PC-9 (cell line): ENCODE measurements at regions of chr5 and their contacts with region 1.

Region 1: DNA sequence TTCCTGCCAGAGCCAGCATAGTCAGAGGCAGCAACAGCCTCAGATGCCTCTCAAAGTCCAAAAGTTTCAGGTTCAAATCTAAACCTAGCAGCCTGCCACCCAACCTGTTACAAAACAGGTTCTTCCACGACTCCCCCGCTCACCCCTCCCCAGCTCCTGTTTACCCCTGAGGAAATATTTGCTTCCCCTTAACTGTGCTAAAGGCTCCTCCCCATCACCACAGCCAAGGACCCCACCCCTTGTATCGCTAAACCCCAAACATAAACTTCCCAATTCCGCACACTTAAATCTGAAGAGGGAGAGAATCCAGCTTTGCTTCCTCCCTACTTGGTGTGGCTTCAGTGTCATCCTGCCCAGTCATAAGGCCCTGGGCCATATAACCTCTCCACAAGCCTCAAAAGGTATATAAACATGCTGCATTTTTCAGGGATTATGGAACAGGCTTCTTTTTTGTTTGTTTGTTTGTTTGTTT is 15.5 kb upstream of the VDAC1 start:
- DNase-seq: peak; percentile 75 to 96
- H3K4me3 ChIP-seq: peak overlapping the region; percentile 32; the same call in 1 of the 2 replicates
- H3K27ac ChIP-seq: peak overlapping the region; percentile 92
- H3K4me1 ChIP-seq: peaks cover 74% of the 10 kb centered on the region
- H3K27me3 ChIP-seq: no peaks in the 10 kb centered on the region
- CTCF ChIP-seq: no peak

Region 2: DNA sequence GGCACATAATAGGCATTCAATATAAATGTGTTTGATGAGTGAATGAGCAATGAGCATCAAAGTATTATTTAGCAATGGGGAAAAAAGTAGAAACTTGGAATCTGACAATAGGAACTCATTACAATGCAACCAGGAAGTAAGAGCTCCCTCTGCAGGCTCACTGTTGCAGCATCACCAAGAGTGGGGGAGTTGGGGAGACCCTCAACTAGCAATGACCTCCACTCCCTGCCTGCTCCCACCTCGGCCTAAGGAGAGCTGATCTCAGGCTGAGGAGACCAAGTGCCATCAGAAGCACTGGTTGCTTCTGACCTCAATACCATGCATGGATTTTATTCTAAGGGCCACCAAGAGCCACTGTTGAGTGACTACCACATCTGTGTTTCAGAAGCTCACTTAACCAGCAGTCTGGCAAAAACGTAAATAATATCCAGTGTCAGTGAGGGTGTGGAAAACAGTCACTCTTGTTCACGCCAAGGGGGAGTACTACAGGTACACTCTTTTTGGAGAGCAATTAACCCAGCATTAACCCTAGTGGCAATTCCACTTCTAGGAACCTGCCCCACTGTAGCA is 23.5 kb before region 1 on chr5:
- CTCF ChIA-PET with region 1: interaction called, 6 read pairs
- POLR2A ChIA-PET with region 1: interaction called, 10 read pairs
- intact Hi-C with region 1: no loop called
- DNase-seq: no peak
- H3K4me3 ChIP-seq: no peak overlapping the region
- H3K27ac ChIP-seq: no peak overlapping the region
- H3K4me1 ChIP-seq: peaks cover 79% of the 10 kb centered on the region
- H3K27me3 ChIP-seq: no peaks in the 10 kb centered on the region
- CTCF ChIP-seq: peak; percentile 67

Region 3: DNA sequence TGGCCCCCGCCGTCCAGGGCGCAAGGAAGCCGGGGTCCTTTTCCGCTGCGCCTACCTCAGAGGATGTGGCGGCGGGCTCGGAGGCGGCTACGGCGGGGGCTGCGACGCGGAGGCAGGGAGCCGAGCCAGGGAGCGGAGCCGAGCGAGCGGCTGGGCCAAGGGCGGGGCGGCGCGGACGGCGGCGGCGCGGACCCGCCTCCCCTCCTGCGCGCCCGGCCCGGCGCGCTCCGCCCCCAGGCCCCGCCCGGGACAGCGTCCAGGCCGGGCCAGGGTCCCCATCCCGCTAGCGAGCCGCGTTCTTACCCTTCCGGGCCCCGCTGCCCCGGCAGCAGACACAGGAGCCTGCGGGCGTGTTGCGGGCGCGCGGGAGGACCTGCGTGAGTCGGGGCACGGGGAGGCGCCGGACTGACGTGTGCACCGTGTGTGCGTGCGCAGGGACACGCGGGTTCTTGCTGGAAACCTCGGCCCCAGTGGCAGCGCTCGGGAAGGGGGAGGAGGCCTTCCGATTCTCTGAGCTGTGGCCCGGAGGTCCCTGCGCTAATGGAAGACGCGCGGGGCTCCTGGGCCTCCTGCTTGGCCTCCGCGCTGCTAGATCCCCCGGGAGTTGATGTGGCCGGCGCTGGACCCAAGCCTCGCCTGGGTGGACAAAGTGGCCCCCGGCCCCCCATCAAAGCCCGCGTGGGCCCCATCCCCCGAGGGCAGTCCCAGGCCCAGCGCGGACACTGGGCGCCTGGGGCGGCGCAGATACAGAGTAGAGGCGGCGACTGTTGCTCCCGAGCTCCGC is 15.5 kb before region 1 on chr5 and contains the start of gene VDAC1:
- CTCF ChIA-PET with region 1: interaction called, 7 read pairs
- POLR2A ChIA-PET with region 1: no interaction called
- intact Hi-C with region 1: loop called (anchors 1 kb)
- DNase-seq: peak; percentile 49 to 73
- H3K4me3 ChIP-seq: peak within 1 kb of the TSS; percentile 85
- H3K27ac ChIP-seq: peak within 1 kb of the TSS; percentile 69
- H3K4me1 ChIP-seq: peaks cover 44% of the 10 kb centered on the region
- H3K27me3 ChIP-seq: no peaks in the 10 kb centered on the region
- CTCF ChIP-seq: no peak
- total RNA-seq, gene VDAC1: 157 and 228 TPM in 2 replicates